Heart left ventricle (tissue), 16 donors: ENCODE measurements at regions of chr20 and their contacts with region 1.

Region 1: GRCh38 chr20:6583134-6583738 is 184.2 kb upstream of the BMP2 start:
- DNase-seq: peak in 4 of 5 donors; percentile 32 to 61 (median 34)
- ATAC-seq: peak in 3 of 4 donors; percentile 59 to 81 (median 60)
- H3K4me3 ChIP-seq: no peak overlapping the region
- H3K27ac ChIP-seq: no peak overlapping the region
- H3K4me1 ChIP-seq: peaks cover 0 to 7% (median 0%) of the 10 kb centered on the region in 12 donors
- H3K27me3 ChIP-seq: no peaks in the 10 kb centered on the region
- CTCF ChIP-seq: peak; percentile 34 to 80 (median 55)
- POLR2A ChIP-seq: no peak

Region 2: DNA sequence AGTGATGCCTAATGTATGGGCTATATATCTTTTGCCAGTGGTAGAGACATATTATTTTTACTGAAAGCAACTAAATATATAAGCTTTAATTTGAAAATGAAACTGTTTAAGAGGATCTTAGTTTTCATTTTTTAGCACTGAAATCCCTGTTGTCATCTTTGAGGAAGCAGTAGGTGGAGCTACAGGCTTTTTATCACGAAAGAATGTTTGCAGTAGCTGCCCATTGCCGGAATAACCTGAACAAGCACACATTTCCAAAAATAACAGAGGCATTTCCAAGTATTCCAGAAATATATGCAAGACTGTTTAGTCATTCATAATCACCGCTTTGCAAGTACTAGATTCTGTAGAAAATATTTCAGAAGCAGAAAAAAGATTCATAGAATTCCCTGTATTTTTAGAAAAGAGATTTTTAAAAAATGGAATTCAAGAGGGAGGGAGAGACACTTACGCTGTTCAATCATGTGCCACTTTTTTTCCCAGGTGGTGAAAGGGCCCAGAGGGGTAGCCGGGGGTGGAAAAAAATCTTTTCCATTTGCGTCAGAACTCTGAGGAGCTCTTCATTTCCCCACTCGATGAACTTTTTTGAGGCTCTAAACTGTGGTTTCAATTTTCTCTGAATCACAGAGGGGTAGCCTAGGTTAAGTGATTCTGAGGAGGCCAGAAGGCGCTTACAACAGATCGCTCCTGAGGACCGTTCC is 317.9 kb before region 1 on chr20:
- intact Hi-C with region 1: loop called in 1 of 10 experiments (anchors 10 kb)
- DNase-seq: peak in 1 of 5 donors; percentile 22
- ATAC-seq: peak in 3 of 4 donors; percentile 65 to 87 (median 83)
- H3K4me3 ChIP-seq: peak overlapping the region in 5 of 12 donors; percentile 8 to 37 (median 16)
- H3K27ac ChIP-seq: peak overlapping the region in 9 of 12 donors; percentile 3 to 57 (median 17)
- H3K4me1 ChIP-seq: peaks cover 0 to 10% (median 3%) of the 10 kb centered on the region in 12 donors
- H3K27me3 ChIP-seq: no peaks in the 10 kb centered on the region
- CTCF ChIP-seq: peak in 11 of 12 donors; percentile 9 to 65 (median 34)
- POLR2A ChIP-seq: no peak

Region 3: GRCh38 chr20:6636209-6637159 is 53.2 kb after region 1 on chr20:
- intact Hi-C with region 1: no loop called
- DNase-seq: peak in 2 of 5 donors; percentile 30 to 41
- ATAC-seq: peak; percentile 75 to 91 (median 84)
- H3K4me3 ChIP-seq: no peak overlapping the region
- H3K27ac ChIP-seq: peak overlapping the region in 2 of 12 donors; percentile 2 to 9
- H3K4me1 ChIP-seq: peaks cover 0 to 7% (median 0%) of the 10 kb centered on the region in 12 donors
- H3K27me3 ChIP-seq: no peaks in the 10 kb centered on the region
- CTCF ChIP-seq: peak in 11 of 12 donors; percentile 30 to 66 (median 45)
- POLR2A ChIP-seq: no peak